ENCODE measurements at regions of chr14 and their contacts with region 1.

Region 1: GRCh38 chr14:33908540-33909223 is 42.2 kb downstream of the EGLN3 start:
- DNase-seq: no peak
- ATAC-seq: no peak
- H3K4me3 ChIP-seq: no peak overlapping the region
- H3K4me3 Mint-ChIP-seq: no peak overlapping the region
- H3K27ac ChIP-seq: no peak overlapping the region
- H3K27ac Mint-ChIP-seq: no peak overlapping the region
- H3K4me1 ChIP-seq: no peaks in the 10 kb centered on the region
- H3K4me1 Mint-ChIP-seq: no peaks in the 10 kb centered on the region
- H3K27me3 ChIP-seq: no peaks in the 10 kb centered on the region
- H3K27me3 Mint-ChIP-seq: no peaks in the 10 kb centered on the region
- CTCF ChIP-seq: no peak

Region 2: GRCh38 chr14:33938131-33938949 is 29.7 kb after region 1 on chr14:
- CTCF ChIA-PET with region 1: no interaction called
- POLR2A ChIA-PET with region 1: no interaction called
- intact Hi-C with region 1: loop called in 1 of 2 experiments (anchors 1 kb)
- DNase-seq: no peak
- ATAC-seq: no peak
- H3K4me3 ChIP-seq: no peak overlapping the region
- H3K4me3 Mint-ChIP-seq: no peak overlapping the region
- H3K27ac ChIP-seq: no peak overlapping the region
- H3K27ac Mint-ChIP-seq: no peak overlapping the region
- H3K4me1 ChIP-seq: no peaks in the 10 kb centered on the region
- H3K4me1 Mint-ChIP-seq: no peaks in the 10 kb centered on the region
- H3K27me3 ChIP-seq: no peaks in the 10 kb centered on the region
- H3K27me3 Mint-ChIP-seq: no peaks in the 10 kb centered on the region
- CTCF ChIP-seq: no peak

Measured in CD8-positive, alpha-beta T cell (primary cell).